ENCODE measurements at regions of chr7 and their contacts with region 1.

Region 1: GRCh38 chr7:94907026-94907810 is at the start of gene PPP1R9A:
- DNase-seq: peak; percentile 35 to 64
- ATAC-seq: peak; percentile 85 to 87
- H3K4me3 ChIP-seq: peak within 1 kb of the TSS; percentile 61 to 74 (median 68)
- H3K27ac ChIP-seq: peak within 1 kb of the TSS; percentile 68 to 72 (median 71)
- H3K4me1 ChIP-seq: peaks cover 9 to 14% of the 10 kb centered on the region in 2 donors
- H3K27me3 ChIP-seq: no peaks in the 10 kb centered on the region
- CTCF ChIP-seq: peak in 4 of 5 experiments; percentile 13 to 48 (median 30)
- POLR2A ChIP-seq: no peak
- total RNA-seq, gene PPP1R9A: 5.9 to 38.2 (median 13.7) TPM

Region 2: DNA sequence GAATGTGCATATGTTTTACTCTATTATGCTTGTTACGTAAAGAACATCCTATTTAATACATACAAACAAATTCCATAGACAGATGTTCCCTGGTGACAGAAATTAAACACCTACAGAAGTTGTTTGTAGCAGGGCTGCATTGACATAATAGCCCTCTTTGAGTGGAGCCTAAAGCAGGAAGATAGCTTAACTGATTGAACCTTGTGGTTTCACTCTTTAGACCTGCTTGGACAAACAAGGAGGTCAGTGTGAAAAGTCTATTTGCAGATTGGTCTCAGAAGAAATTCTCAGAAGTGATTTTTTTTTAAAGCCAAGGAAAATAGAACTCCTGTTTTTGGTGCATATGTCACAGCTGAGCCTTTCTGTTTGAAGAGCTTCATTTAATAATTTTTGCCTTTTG is 121.5 kb after region 1 on chr7:
- in situ Hi-C with region 1: no loop called
- intact Hi-C with region 1: no loop called
- DNase-seq: no peak
- ATAC-seq: no peak
- H3K4me3 ChIP-seq: no peak overlapping the region
- H3K27ac ChIP-seq: no peak overlapping the region
- H3K4me1 ChIP-seq: no peaks in the 10 kb centered on the region
- H3K27me3 ChIP-seq: no peaks in the 10 kb centered on the region
- CTCF ChIP-seq: no peak
- POLR2A ChIP-seq: no peak

Region 3: DNA sequence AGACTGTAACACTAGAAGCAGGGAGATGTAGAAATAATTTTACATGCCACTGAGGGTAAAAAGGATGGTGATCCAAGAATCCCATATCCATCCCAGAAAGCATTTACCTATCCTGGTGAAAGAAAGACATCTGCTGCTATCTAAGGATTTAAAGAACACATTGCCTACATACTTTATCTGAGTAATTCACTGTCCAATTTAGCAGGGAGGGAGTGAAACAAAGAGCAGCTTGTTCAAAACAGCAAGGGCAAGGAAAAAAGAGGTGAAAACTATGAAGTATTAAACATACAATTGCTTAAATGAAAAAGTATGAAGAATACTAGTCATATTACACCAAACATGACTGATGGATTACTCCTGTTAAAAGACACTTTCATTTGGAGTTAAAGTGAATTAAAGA is 206.4 kb after region 1 on chr7:
- in situ Hi-C with region 1: no loop called
- intact Hi-C with region 1: no loop called
- DNase-seq: no peak
- ATAC-seq: no peak
- H3K4me3 ChIP-seq: no peak overlapping the region
- H3K27ac ChIP-seq: no peak overlapping the region
- H3K4me1 ChIP-seq: no peaks in the 10 kb centered on the region
- H3K27me3 ChIP-seq: no peaks in the 10 kb centered on the region
- CTCF ChIP-seq: no peak
- POLR2A ChIP-seq: no peak

Region 4: GRCh38 chr7:95199779-95200558 is 292.8 kb after region 1 on chr7:
- in situ Hi-C with region 1: no loop called
- intact Hi-C with region 1: loop called (anchors 10 kb)
- DNase-seq: peak in 1 of 2 donors; percentile 17
- ATAC-seq: peak; percentile 58 to 74
- H3K4me3 ChIP-seq: no peak overlapping the region
- H3K27ac ChIP-seq: no peak overlapping the region
- H3K4me1 ChIP-seq: no peaks in the 10 kb centered on the region
- H3K27me3 ChIP-seq: no peaks in the 10 kb centered on the region
- CTCF ChIP-seq: peak in 4 of 5 experiments; percentile 26 to 61 (median 49)
- POLR2A ChIP-seq: no peak